ENCODE measurements at regions of chr9 and their contacts with region 1.

Region 1: GRCh38 chr9:120916588-120916987 is 10.0 kb downstream of the TRAF1 start:
- DNase-seq: no peak
- ATAC-seq: no peak
- H3K4me3 ChIP-seq: no peak overlapping the region
- H3K4me3 Mint-ChIP-seq: no peak overlapping the region
- H3K27ac ChIP-seq: peak overlapping the region; percentile 43
- H3K27ac Mint-ChIP-seq: peak overlapping the region; percentile 90
- H3K4me1 ChIP-seq: peaks cover 96% of the 10 kb centered on the region
- H3K4me1 Mint-ChIP-seq: peaks cover 88% of the 10 kb centered on the region
- H3K27me3 ChIP-seq: no peaks in the 10 kb centered on the region
- H3K27me3 Mint-ChIP-seq: no peaks in the 10 kb centered on the region
- CTCF ChIP-seq: no peak

Region 2: GRCh38 chr9:120698766-120699165 is 217.8 kb before region 1 on chr9:
- CTCF ChIA-PET with region 1: no interaction called
- POLR2A ChIA-PET with region 1: no interaction called
- intact Hi-C with region 1: no loop called
- DNase-seq: no peak
- ATAC-seq: no peak
- H3K4me3 ChIP-seq: no peak overlapping the region
- H3K4me3 Mint-ChIP-seq: no peak overlapping the region
- H3K27ac ChIP-seq: no peak overlapping the region
- H3K27ac Mint-ChIP-seq: no peak overlapping the region
- H3K4me1 ChIP-seq: no peaks in the 10 kb centered on the region
- H3K4me1 Mint-ChIP-seq: no peaks in the 10 kb centered on the region
- H3K27me3 ChIP-seq: no peaks in the 10 kb centered on the region
- H3K27me3 Mint-ChIP-seq: no peaks in the 10 kb centered on the region
- CTCF ChIP-seq: no peak

Region 3: DNA sequence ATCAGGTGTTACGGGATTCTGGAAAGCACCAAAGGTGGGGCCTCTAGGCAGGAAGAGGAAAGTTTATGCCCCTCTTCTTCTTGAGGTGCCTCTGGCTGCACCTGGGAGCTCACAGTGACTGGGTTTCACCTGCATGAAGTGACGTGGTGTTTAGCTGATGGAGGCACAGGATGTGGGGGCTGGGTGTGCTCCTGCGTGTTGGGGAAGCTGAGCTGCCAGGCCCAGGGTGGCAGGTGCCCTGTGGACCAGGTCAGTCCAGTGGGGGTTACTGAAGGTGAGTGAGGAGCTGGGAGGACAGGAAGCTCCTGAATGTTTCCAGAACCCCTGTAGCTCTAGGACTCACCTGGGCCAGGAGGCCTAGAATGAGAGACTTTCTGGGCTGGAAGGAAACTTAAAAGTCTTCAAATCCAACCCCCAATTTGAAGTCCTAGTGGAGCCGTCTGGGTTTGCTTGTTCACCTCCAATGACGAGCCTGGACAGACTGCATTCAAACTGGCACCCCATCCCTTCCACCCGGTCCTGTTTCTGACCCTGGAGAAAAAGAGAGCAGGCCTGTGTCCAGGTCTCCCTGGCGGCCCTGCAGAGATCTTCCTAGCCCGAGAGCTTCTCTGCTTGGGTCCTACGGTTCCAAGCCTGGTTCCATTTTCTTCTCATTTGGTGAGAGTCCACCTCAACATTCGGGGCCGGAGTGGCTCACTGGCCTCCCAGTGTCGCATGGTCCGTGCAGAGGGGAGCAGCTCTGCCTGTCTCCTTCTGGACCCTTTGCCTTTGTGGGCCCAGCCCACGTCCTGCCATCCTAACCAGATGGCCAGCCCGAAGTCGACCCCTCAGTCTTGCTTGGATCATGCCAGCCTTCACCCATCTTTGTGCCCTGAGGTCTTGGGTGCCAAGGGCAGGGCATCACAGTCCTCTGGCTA is 12.3 kb before region 1 on chr9:
- CTCF ChIA-PET with region 1: interaction called, 3 read pairs
- POLR2A ChIA-PET with region 1: interaction called, 1,343 read pairs
- intact Hi-C with region 1: no loop called
- DNase-seq: peak; percentile 54 to 94 (median 70)
- ATAC-seq: peak; percentile 91
- H3K4me3 ChIP-seq: no peak overlapping the region
- H3K4me3 Mint-ChIP-seq: peak overlapping the region; percentile 35
- H3K27ac ChIP-seq: peak overlapping the region; percentile 92 to 93
- H3K27ac Mint-ChIP-seq: peak overlapping the region; percentile 99
- H3K4me1 ChIP-seq: peaks cover 80% of the 10 kb centered on the region
- H3K4me1 Mint-ChIP-seq: peaks cover 88% of the 10 kb centered on the region
- H3K27me3 ChIP-seq: no peaks in the 10 kb centered on the region
- H3K27me3 Mint-ChIP-seq: no peaks in the 10 kb centered on the region
- CTCF ChIP-seq: no peak

Measured in CD4-positive, alpha-beta T cell (primary cell).